Heart left ventricle (tissue), 16 donors: ENCODE measurements at regions of chr4 and their contacts with region 1.

Region 1: GRCh38 chr4:128191115-128191781 is 96.4 kb downstream of the PGRMC2 start:
- DNase-seq: peak in 4 of 5 donors; percentile 43 to 60 (median 50)
- ATAC-seq: peak; percentile 61 to 89 (median 84)
- H3K4me3 ChIP-seq: no peak overlapping the region
- H3K27ac ChIP-seq: no peak overlapping the region
- H3K4me1 ChIP-seq: peaks cover 0 to 11% (median 3%) of the 10 kb centered on the region in 12 donors
- H3K27me3 ChIP-seq: no peaks in the 10 kb centered on the region
- CTCF ChIP-seq: peak; percentile 74 to 90 (median 85)
- POLR2A ChIP-seq: no peak

Region 2: DNA sequence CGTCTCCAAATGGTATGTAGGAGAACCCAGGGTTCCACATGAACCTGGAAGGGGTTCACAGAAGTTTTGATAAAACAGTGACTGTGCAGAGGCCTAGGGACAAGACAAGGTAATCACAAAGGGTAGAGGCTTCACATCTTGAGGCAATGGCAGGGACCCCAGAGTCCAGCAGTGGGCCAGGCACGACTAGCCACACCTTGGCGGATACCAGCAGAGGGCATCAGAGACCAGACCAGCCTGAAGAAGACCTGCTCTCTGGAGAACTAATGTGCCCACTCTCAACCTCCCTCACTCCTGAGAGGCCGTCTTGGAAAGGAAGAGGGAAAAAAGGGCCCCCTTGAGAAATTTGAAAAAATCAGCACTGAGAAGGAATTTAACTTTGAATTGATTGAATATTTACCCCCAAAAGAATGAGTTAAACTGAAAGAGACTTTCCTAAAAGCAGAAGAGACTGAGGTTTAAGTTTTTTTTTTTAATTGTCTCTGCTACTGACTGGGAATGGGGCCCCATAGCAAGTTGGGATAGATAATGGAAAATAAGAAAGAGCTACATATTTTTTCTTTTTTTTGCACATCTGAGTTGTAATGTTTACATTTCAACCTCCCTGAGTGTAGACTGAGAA is 374.4 kb after region 1 on chr4:
- intact Hi-C with region 1: loop called in 2 of 10 experiments (anchors 10 kb)
- DNase-seq: peak; percentile 35 to 68 (median 51)
- ATAC-seq: peak; percentile 65 to 81 (median 78)
- H3K4me3 ChIP-seq: no peak overlapping the region
- H3K27ac ChIP-seq: no peak overlapping the region
- H3K4me1 ChIP-seq: peaks cover 0 to 12% (median 0%) of the 10 kb centered on the region in 12 donors
- H3K27me3 ChIP-seq: no peaks in the 10 kb centered on the region
- CTCF ChIP-seq: peak; percentile 27 to 66 (median 57)
- POLR2A ChIP-seq: no peak

Region 3: GRCh38 chr4:128868758-128869157 is 677.5 kb after region 1 on chr4:
- intact Hi-C with region 1: loop called (anchors 1 to 10 kb)
- DNase-seq: no peak
- ATAC-seq: no peak
- H3K4me3 ChIP-seq: no peak overlapping the region
- H3K27ac ChIP-seq: no peak overlapping the region
- H3K4me1 ChIP-seq: peaks cover 0 to 1% (median 0%) of the 10 kb centered on the region in 12 donors
- H3K27me3 ChIP-seq: no peaks in the 10 kb centered on the region
- CTCF ChIP-seq: no peak
- POLR2A ChIP-seq: no peak